ENCODE measurements at regions of chr6 and their contacts with region 1.

Region 1: DNA sequence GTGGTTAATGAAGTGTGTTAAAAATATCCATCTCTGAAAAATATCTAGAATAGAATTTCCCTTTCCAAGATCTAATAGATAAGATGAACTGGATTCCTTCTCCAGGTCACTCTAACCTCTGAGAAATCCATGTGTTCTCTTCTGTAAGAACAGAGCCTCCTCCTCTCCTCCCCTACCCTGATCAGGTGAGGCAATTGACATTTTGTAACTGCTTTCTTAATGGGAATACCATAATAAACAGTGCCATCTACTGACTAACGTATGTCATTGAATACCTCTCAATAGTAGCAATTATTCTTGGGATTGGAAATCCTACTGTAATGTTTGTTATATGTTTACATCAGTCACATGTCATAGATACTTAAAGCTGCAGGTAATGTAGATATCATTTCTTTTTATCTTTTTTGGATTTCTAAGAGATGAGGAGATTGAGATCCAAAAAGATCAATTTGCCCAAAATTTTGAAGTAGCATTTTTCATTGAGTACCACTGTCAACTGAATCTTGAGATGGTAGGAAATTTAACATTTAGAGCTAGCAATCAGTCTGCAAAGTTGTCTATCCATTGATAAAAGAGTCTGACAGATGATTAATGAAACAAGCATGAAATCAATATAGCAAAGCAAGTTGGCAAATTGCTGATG is 365.8 kb upstream of the HSF2 start:
- DNase-seq: no peak
- H3K4me3 ChIP-seq: no peak overlapping the region
- H3K27ac ChIP-seq: no peak overlapping the region
- H3K4me1 ChIP-seq: no peaks in the 10 kb centered on the region
- H3K27me3 ChIP-seq: no peaks in the 10 kb centered on the region
- CTCF ChIP-seq: peak; percentile 49 to 63 (median 62)
- POLR2A ChIP-seq: no peak

Region 2: DNA sequence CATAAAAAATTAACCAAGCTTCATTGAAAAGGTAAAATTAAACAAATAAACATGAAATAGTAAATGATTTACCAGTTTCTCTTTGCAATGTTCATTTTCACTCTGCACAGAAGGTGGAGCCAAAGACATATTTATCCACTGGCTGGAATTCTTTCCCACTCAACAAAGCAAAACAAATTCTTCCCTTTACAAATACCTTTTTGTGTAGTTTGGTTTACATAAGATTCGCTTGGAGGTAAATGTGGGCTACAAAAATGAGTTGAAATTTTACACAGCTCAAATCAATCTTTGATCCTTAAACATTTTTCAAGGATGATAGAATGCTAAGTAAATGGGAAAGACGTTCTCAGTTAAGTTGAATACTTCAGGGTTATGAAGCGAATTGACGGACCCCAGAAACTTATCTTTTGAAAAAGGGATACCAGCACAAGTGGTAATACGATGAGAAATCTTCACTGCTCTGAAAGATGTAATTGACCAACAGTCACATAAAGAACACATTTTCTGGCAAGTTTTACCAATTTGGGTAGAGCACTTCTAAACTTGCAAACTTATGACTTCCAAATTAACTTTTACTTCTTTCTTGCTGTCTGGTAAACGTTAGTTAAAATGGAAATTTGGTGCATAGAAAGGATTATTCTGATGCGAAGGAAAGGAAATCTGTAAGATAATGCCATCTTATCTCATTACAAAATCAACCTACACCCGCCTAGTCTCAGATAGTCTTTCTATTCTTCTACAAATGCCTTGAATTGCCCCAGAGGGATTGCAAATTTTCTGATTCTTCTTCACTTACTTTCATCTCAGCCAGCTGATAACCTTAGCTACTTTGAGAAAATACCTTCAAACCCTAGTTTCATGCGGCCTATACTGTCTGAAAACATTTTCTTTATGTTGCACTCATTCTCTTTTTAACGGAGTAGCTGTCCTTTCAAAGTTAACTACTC is 602.9 kb before region 1 on chr6:
- intact Hi-C with region 1: loop called (anchors 10 kb)
- DNase-seq: no peak
- H3K4me3 ChIP-seq: peak overlapping the region in 1 of 3 donors; percentile 14
- H3K27ac ChIP-seq: peak overlapping the region in 1 of 2 donors; percentile 21
- H3K4me1 ChIP-seq: no peaks in the 10 kb centered on the region
- H3K27me3 ChIP-seq: no peaks in the 10 kb centered on the region
- CTCF ChIP-seq: peak; percentile 12 to 77 (median 75)
- POLR2A ChIP-seq: no peak

Region 3: DNA sequence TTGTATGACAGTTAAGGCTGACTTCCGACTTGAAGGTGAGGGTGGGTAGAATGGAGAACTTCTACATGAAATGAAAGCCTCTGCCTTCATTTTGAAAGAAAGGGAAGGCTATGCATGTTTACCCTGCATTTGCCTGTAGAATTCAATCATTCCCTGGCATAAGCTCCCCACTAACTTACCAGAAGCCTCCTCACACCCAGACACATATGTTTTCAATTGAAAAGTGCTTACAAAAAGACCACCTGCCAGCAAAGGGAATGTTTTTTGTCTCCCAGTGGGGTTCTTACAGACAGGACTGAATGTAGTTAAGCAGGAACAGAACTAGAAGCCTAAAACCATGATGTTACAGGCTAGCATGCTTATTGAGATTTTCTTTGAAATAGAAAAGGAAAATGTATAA is 26.3 kb before region 1 on chr6:
- intact Hi-C with region 1: no loop called
- DNase-seq: no peak
- H3K4me3 ChIP-seq: no peak overlapping the region
- H3K27ac ChIP-seq: no peak overlapping the region
- H3K4me1 ChIP-seq: no peaks in the 10 kb centered on the region
- H3K27me3 ChIP-seq: no peaks in the 10 kb centered on the region
- CTCF ChIP-seq: no peak
- POLR2A ChIP-seq: no peak

Region 4: DNA sequence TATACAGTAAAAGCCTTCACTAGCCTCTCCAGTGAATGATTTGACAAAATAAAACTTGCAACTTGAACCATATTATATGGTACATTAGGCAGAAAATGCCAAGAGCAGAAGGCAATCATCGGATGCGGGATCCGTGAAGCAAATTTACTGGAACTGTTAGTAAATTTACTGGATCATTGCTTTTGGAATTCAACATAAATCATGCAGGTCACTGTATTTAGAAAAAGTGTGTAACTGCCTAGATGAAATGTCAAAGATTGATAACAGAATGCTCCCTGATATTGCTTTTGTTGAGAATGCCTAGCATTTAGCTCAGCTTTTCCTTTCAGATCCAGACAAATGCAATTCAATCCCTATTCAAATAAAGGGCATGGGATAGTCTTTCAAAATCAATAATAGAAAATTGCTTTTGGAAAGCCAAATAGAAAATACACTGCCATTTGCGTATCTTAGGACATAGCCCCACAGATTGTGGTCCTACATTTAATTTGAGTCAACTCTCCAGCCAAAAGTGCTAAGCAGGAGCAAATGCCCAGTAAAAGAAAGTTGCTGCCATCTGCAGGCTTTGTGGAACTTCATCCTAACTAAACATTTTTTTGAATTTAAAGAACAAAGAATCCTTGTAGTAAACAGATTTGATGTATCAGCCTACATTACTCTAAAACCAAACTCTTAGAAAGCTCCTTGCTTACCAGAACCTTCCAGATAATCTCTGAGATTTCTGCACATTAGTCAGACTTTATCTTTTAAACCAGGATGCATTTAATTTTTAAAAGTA is 256.3 kb after region 1 on chr6:
- intact Hi-C with region 1: loop called (anchors 5 kb)
- DNase-seq: no peak
- H3K4me3 ChIP-seq: no peak overlapping the region
- H3K27ac ChIP-seq: no peak overlapping the region
- H3K4me1 ChIP-seq: no peaks in the 10 kb centered on the region
- H3K27me3 ChIP-seq: no peaks in the 10 kb centered on the region
- CTCF ChIP-seq: no peak
- POLR2A ChIP-seq: no peak

Region 5: GRCh38 chr6:123434186-123434585 is 1400.5 kb after region 1 on chr6:
- intact Hi-C with region 1: no loop called
- DNase-seq: no peak
- H3K4me3 ChIP-seq: no peak overlapping the region
- H3K27ac ChIP-seq: no peak overlapping the region
- H3K4me1 ChIP-seq: no peaks in the 10 kb centered on the region
- H3K27me3 ChIP-seq: no peaks in the 10 kb centered on the region
- CTCF ChIP-seq: no peak
- POLR2A ChIP-seq: no peak

Measured in breast epithelium (tissue), 4 donors.